Naive thymus-derived CD4-positive, alpha-beta T cell (primary cell): ENCODE measurements at regions of chrX and their contacts with region 1.

Region 1: GRCh38 chrX:134186362-134187121 is 50.4 kb upstream of the CCDC160 start:
- DNase-seq: peak in 8 of 9 donors; percentile 60 to 88 (median 76)
- ATAC-seq: peak; percentile 94
- H3K4me3 ChIP-seq: peak overlapping the region; percentile 24
- H3K4me3 Mint-ChIP-seq: peak overlapping the region; percentile 21 to 98 (median 74)
- H3K27ac ChIP-seq: no peak overlapping the region
- H3K27ac Mint-ChIP-seq: peak overlapping the region in 5 of 9 donors; percentile 4 to 96 (median 44)
- H3K4me1 ChIP-seq: peaks cover 10 to 19% of the 10 kb centered on the region in 2 donors
- H3K4me1 Mint-ChIP-seq: peaks cover 0 to 50% (median 37%) of the 10 kb centered on the region in 7 donors
- H3K27me3 ChIP-seq: no peaks in the 10 kb centered on the region
- H3K27me3 Mint-ChIP-seq: no peaks in the 10 kb centered on the region

Region 2: GRCh38 chrX:133792198-133792953 is 394.2 kb before region 1 on chrX:
- CTCF ChIA-PET with region 1: no interaction called
- POLR2A ChIA-PET with region 1: no interaction called
- intact Hi-C with region 1: loop called in 1 of 2 experiments (anchors 1 kb)
- DNase-seq: peak; percentile 22 to 71 (median 54)
- ATAC-seq: peak; percentile 87
- H3K4me3 ChIP-seq: no peak overlapping the region
- H3K4me3 Mint-ChIP-seq: no peak overlapping the region
- H3K27ac ChIP-seq: no peak overlapping the region
- H3K27ac Mint-ChIP-seq: no peak overlapping the region
- H3K4me1 ChIP-seq: no peaks in the 10 kb centered on the region
- H3K4me1 Mint-ChIP-seq: no peaks in the 10 kb centered on the region
- H3K27me3 ChIP-seq: no peaks in the 10 kb centered on the region
- H3K27me3 Mint-ChIP-seq: peaks cover 0 to 3% (median 0%) of the 10 kb centered on the region in 5 donors

Region 3: DNA sequence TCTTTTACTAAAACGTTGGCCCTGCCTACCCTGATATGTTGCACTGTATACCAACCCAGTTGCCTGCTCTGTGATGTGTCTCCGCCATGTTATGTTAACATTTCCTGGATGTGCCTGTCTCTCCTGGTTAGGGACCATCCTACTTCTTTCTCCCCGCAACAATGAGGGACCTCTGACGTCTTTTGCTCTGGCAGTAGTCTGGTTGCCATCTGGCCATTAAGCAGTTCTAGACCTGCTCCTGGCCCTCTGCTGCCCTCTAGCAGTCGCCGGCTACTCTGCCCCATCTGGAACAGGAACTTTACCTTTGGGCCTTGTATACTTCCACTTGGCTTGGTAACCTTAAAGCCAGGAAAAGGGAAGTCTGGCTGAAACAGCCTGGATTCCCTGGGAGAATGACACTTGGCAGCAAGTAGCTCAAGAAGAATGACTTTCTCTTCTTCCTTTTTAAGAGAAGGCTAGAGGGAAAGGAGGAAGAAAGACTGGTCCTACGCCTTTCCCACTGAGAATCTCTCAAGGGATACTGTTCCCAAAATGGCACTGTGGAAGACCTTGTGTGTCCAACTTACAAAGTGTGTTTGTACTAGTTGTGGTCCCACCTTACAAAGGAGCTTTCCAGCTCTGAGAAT is 264.7 kb before region 1 on chrX:
- CTCF ChIA-PET with region 1: no interaction called
- POLR2A ChIA-PET with region 1: no interaction called
- intact Hi-C with region 1: loop called in 1 of 2 experiments (anchors 5 kb)
- DNase-seq: peak in 5 of 9 donors; percentile 7 to 33 (median 22)
- ATAC-seq: no peak
- H3K4me3 ChIP-seq: peak overlapping the region; percentile 24
- H3K4me3 Mint-ChIP-seq: peak overlapping the region in 5 of 10 donors; percentile 7 to 90 (median 83)
- H3K27ac ChIP-seq: no peak overlapping the region
- H3K27ac Mint-ChIP-seq: peak overlapping the region in 7 of 9 donors; percentile 38 to 95 (median 92)
- H3K4me1 ChIP-seq: peaks cover 13 to 17% of the 10 kb centered on the region in 2 donors
- H3K4me1 Mint-ChIP-seq: peaks cover 4 to 39% (median 26%) of the 10 kb centered on the region in 7 donors
- H3K27me3 ChIP-seq: no peaks in the 10 kb centered on the region
- H3K27me3 Mint-ChIP-seq: no peaks in the 10 kb centered on the region

Region 4: DNA sequence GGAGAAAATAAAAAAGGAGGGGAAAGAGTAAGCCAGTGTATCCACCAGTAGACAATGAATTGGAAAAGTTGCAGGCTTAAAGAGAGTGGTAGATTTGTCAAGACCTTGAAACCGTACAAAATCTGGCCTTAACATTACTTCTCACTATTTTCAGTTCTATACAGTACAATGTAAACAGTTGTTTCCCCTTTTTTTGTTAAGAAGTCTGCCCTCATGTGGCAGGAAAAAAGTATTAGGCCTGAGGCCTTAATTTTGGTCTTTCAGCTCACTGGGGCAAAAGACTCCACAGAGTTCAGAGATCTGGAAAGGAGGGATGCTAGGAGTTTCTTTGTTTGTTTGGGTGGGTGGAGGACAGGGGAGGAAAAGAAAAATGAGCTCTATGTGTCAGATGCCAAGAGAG is 42.3 kb before region 1 on chrX:
- CTCF ChIA-PET with region 1: interaction called, 3 read pairs
- POLR2A ChIA-PET with region 1: no interaction called
- intact Hi-C with region 1: loop called (anchors 1 to 2 kb)
- DNase-seq: peak in 2 of 9 donors; percentile 3 to 15
- ATAC-seq: peak; percentile 37
- H3K4me3 ChIP-seq: no peak overlapping the region
- H3K4me3 Mint-ChIP-seq: no peak overlapping the region
- H3K27ac ChIP-seq: no peak overlapping the region
- H3K27ac Mint-ChIP-seq: peak overlapping the region in 2 of 9 donors; percentile 2 to 50
- H3K4me1 ChIP-seq: no peaks in the 10 kb centered on the region
- H3K4me1 Mint-ChIP-seq: peaks cover 0 to 5% (median 0%) of the 10 kb centered on the region in 7 donors
- H3K27me3 ChIP-seq: no peaks in the 10 kb centered on the region
- H3K27me3 Mint-ChIP-seq: peaks cover 0 to 7% (median 0%) of the 10 kb centered on the region in 5 donors

Region 5: GRCh38 chrX:134236626-134237614 is 50.4 kb after region 1 on chrX and contains the start of gene CCDC160:
- CTCF ChIA-PET with region 1: no interaction called
- POLR2A ChIA-PET with region 1: no interaction called
- intact Hi-C with region 1: loop called in 1 of 2 experiments (anchors 5 kb)
- DNase-seq: peak in 1 of 9 donors; percentile 28
- ATAC-seq: no peak
- H3K4me3 ChIP-seq: no peak within 1 kb of the TSS
- H3K4me3 Mint-ChIP-seq: peak within 1 kb of the TSS; percentile 17 to 62 (median 36)
- H3K27ac ChIP-seq: no peak within 1 kb of the TSS
- H3K27ac Mint-ChIP-seq: no peak within 1 kb of the TSS
- H3K4me1 ChIP-seq: no peaks in the 10 kb centered on the region
- H3K4me1 Mint-ChIP-seq: peaks cover 0 to 21% (median 0%) of the 10 kb centered on the region in 7 donors
- H3K27me3 ChIP-seq: no peaks in the 10 kb centered on the region
- H3K27me3 Mint-ChIP-seq: peaks cover 0 to 12% (median 6%) of the 10 kb centered on the region in 5 donors
- total RNA-seq, gene CCDC160: not detected

Region 6: DNA sequence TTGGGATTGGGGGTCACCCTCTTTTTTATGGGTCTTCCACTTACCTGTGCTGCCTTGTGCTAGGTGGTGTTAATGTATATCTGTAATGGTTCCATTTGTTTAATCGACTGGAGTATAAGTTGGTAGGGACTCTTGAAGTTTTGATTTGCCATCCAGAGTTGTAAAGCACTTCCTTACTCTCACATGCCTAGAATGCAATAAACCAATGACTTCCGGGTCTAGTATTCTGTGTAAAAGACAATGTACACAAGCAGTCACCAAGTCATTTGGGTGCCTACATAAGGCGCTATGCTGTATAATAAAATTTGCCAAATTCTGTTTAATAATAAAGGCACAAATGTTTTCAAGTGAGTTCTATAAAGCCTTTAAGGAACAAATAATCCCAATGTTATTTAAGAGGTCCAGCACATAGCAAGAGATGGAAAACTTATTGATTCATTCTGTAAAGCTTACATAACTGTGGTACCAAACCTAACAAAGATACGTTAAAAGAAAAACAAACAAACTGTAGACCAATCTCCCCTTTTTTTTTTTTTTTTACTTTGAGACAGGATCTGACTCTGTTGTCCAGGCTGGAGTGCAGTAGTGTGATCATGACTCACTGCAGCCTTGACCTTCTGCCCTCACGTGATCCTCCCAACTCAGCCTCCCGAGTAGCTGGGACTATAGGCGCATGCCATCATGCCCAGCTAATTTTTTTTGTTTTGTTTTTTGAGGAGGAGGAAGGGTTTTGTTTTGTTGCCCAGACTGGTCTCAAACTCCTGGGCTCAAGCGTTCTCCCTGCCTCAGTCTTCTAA is 232.0 kb after region 1 on chrX:
- CTCF ChIA-PET with region 1: no interaction called
- POLR2A ChIA-PET with region 1: no interaction called
- intact Hi-C with region 1: no loop called
- DNase-seq: no peak
- ATAC-seq: no peak
- H3K4me3 ChIP-seq: no peak overlapping the region
- H3K4me3 Mint-ChIP-seq: no peak overlapping the region
- H3K27ac ChIP-seq: no peak overlapping the region
- H3K27ac Mint-ChIP-seq: no peak overlapping the region
- H3K4me1 ChIP-seq: no peaks in the 10 kb centered on the region
- H3K4me1 Mint-ChIP-seq: no peaks in the 10 kb centered on the region
- H3K27me3 ChIP-seq: no peaks in the 10 kb centered on the region
- H3K27me3 Mint-ChIP-seq: no peaks in the 10 kb centered on the region